Cardiac septum (tissue), 1 donor: ENCODE measurements at regions of chr16 and their contacts with region 1.

Region 1: DNA sequence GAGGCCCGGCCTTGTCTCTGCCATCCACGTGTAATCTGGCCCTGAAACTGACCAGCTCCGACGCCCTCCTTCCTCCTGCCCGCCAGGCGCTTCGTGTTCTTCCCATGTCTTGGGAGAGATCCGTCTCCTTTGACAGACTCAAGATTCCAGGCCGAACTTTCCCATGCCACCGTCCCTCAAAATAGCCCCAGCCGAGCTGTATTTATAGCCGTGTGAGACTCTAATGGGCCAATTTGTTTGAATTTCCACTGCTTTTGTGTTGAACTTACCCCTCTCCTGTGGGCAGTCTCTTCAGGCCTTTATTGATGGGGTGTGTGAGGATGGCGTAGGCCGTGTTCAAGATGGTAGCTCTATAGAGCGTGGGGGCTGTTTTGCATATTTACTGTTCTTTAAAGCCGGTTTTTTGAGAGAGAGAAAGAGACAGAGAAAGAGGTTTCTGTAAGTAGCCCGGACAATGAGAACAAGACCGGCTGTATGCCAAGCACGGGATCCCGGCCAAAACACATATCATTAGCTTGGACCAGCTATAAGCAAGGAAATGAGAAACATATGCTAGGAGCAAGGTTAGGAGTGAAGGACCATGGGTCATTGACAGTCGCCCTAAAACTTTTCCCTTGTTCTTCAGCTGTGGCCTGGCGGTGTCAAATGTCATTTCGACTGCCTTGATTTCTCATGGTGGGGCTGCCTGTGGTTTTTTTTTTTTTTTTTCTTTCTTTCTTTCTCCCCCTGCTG is 124.5 kb upstream of the ZFHX3 start:
- DNase-seq: peak; percentile 82

Region 2: DNA sequence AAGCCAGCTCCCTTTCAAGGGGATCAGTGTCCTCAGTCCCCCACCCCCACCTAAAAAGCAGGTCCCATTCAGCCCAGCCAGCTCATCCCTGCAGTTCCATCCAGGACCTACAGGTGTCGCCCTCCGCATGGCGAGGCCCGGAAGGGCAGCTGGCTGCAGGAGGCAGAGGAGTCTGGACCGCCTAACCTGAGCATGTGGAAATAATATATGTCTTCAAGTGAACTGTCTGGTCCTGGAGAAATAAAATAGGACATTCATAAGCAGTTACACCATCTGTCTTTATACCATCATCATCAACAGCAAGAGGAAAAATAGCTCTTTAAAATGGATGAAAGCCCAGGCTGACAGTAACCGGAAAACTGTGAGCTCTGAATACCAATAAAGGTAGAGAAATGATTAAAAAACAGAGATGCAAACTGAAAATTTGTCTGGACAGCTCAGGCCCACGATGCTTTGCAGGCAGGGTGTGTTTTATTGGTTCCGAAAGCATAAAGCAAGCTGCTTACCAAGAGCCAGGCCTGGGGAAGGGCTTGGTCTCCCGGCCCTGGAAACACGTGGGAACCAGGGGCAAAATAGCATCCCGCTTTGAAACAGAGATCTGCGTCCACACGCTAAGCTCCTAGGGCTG is 339.7 kb before region 1 on chr16:
- intact Hi-C with region 1: loop called (anchors 5 kb)
- DNase-seq: peak; percentile 91

Region 3: GRCh38 chr16:72938795-72939164 is 233.6 kb before region 1 on chr16:
- intact Hi-C with region 1: loop called (anchors 5 kb)
- DNase-seq: peak; percentile 92

Region 4: GRCh38 chr16:72963533-72964315 is 208.7 kb before region 1 on chr16:
- intact Hi-C with region 1: no loop called
- DNase-seq: no peak

Region 5: GRCh38 chr16:72989579-72990551 is 182.5 kb before region 1 on chr16:
- intact Hi-C with region 1: loop called (anchors 10 kb)
- DNase-seq: no peak

Region 6: GRCh38 chr16:73068541-73069401 is 103.6 kb before region 1 on chr16:
- intact Hi-C with region 1: loop called (anchors 5 kb)
- DNase-seq: no peak

Region 7: DNA sequence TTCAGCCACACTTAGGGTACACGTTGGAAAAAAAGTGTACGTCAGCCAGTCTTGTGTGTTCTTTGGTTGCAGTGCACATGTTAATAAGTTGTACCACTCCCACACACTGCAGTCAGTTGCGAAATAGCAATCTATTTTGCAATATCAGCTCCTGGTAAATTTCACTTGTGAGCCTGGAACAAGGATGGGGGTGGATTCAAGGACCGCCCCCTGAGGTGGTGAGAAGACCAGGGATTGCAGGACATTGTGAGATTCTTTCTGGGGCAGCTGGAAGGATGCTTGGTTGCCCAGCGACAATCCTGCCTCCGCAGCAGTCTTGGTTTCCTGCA is 45.9 kb before region 1 on chr16:
- intact Hi-C with region 1: loop called (anchors 5 kb)
- DNase-seq: no peak